WTC11 (cell line): ENCODE measurements at regions of chr14 and their contacts with region 1.

Region 1: GRCh38 chr14:21723431-21724045 is 49.9 kb upstream of the OR4E1 start:
- DNase-seq: peak; percentile 84
- ATAC-seq: peak; percentile 100
- H3K4me3 Mint-ChIP-seq: no peak overlapping the region
- H3K27ac Mint-ChIP-seq: no peak overlapping the region
- H3K4me1 Mint-ChIP-seq: peaks cover 3% of the 10 kb centered on the region
- H3K27me3 Mint-ChIP-seq: peaks cover 14% of the 10 kb centered on the region
- CTCF ChIP-seq: peak; percentile 61

Region 2: DNA sequence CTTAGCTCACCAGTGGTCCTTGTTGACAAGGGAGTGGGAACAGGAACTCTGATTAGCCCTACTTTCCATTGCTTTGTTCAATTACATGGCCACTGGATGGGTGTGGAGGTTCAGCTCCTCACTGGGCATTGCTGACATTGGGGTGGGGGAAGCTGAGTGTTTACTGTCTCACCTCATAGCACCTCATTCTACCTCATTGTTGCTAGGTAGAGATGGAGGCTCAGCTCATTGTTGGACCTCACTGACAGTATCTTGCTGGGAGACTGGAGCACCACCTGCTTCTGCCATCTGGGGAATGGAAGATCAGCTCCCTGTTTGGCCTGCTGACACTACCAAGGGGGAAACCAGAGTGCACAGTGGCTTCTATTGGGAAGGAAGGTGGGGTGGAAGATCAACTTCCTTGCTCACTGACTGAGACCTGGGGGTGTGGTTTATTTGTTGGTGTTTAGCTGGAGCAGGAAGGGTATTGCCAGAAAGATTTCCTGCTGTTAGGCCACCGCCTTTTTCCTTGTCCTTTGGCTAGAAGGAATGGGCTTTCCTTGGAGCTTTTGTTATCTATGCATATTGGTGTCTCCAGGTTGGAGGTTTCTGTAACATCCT is 71.2 kb before region 1 on chr14:
- CTCF ChIA-PET with region 1: interaction called, 12 read pairs
- POLR2A ChIA-PET with region 1: interaction called, 3 read pairs
- DNase-seq: no peak
- ATAC-seq: peak; percentile 90
- H3K4me3 Mint-ChIP-seq: no peak overlapping the region
- H3K27ac Mint-ChIP-seq: no peak overlapping the region
- H3K4me1 Mint-ChIP-seq: peaks cover 11% of the 10 kb centered on the region; the same call in 1 of the 2 replicates
- H3K27me3 Mint-ChIP-seq: no peaks in the 10 kb centered on the region
- CTCF ChIP-seq: no peak

Region 3: GRCh38 chr14:21734457-21735074 is 11.0 kb after region 1 on chr14:
- CTCF ChIA-PET with region 1: interaction called, 37 read pairs
- POLR2A ChIA-PET with region 1: no interaction called
- DNase-seq: no peak
- ATAC-seq: no peak
- H3K4me3 Mint-ChIP-seq: no peak overlapping the region
- H3K27ac Mint-ChIP-seq: no peak overlapping the region
- H3K4me1 Mint-ChIP-seq: peaks cover 10% of the 10 kb centered on the region
- H3K27me3 Mint-ChIP-seq: peaks cover 10% of the 10 kb centered on the region
- CTCF ChIP-seq: peak; percentile 74

Region 4: DNA sequence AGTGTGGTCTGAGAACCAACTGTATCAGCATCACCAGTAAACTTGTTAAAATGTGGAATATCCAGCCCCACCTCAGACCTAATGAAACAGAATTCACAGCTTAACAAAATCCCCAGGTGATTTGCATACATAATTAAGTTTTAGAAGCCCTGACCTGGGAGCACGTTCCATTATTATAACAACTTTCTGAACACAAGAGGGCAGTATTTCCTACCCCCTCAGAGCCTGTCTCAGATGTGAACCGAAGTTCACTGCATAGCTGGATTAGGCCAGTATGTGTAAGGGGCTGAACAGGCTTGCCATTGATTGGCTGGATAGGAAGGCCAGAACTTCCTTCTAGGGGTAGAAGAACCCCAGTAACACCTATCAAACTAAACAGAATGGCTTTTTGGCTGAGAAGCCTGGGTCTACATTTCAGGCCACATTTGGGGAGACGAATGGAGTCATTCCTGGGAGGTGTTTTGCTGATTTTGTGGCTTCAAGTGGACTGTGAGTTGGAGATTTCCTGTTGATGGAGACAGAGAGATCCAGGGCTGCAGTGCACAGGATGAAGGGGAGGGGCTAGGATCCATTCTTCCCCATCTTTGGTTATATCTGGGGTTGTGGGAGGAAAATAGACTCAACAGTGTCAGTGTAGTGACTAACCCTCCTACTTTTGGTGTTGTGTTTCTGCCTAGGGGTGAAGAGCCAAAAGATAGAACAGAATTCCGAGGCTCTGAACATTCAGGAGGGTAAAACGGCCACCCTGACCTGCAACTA is 44.8 kb after region 1 on chr14:
- CTCF ChIA-PET with region 1: interaction called, 22 read pairs
- POLR2A ChIA-PET with region 1: no interaction called
- DNase-seq: no peak
- ATAC-seq: peak; percentile 98
- H3K4me3 Mint-ChIP-seq: no peak overlapping the region
- H3K27ac Mint-ChIP-seq: no peak overlapping the region; the same call in 1 of the 2 replicates
- H3K4me1 Mint-ChIP-seq: peaks cover 14% of the 10 kb centered on the region
- H3K27me3 Mint-ChIP-seq: peaks cover 14% of the 10 kb centered on the region
- CTCF ChIP-seq: no peak

Region 5: DNA sequence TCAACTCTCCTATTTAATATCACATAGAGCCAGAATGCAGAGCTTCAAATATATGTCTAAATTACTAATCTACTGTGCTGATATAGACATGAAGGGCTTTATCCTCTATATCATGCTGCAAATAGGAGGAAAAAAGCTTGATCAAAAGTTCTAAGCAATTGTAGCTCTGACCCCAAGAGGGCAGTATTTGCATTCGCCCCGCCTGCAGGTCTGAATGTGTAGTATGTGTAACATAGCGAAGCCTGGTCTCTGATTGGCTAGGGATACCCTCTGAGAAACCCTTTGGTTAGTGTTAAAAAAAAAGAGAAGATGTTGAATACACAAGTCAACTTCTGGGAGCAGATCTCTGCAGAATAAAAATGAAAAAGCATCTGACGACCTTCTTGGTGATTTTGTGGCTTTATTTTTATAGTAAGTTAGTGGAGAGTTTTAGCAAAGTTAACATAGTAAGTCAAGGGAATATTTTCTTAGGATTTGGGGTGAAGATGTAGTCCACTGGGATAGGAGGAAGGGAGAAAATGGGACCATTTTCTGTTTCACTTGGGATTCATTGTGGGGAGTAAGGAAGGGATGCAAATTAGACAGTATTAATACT is 101.7 kb after region 1 on chr14:
- CTCF ChIA-PET with region 1: interaction called, 14 read pairs
- POLR2A ChIA-PET with region 1: no interaction called
- DNase-seq: peak; percentile 63
- ATAC-seq: peak; percentile 99
- H3K4me3 Mint-ChIP-seq: no peak overlapping the region
- H3K27ac Mint-ChIP-seq: no peak overlapping the region
- H3K4me1 Mint-ChIP-seq: peaks cover 7% of the 10 kb centered on the region
- H3K27me3 Mint-ChIP-seq: peaks cover 11% of the 10 kb centered on the region; the same call in 1 of the 2 replicates
- CTCF ChIP-seq: peak; percentile 55; the same call in 1 of the 2 replicates

Region 6: GRCh38 chr14:21852061-21852664 is 128.6 kb after region 1 on chr14:
- CTCF ChIA-PET with region 1: interaction called, 28 read pairs
- POLR2A ChIA-PET with region 1: no interaction called
- DNase-seq: peak; percentile 77
- ATAC-seq: peak; percentile 83
- H3K4me3 Mint-ChIP-seq: no peak overlapping the region
- H3K27ac Mint-ChIP-seq: no peak overlapping the region
- H3K4me1 Mint-ChIP-seq: no peaks in the 10 kb centered on the region
- H3K27me3 Mint-ChIP-seq: peaks cover 20% of the 10 kb centered on the region
- CTCF ChIP-seq: peak; percentile 30